ENCODE measurements at regions of chr22 and their contacts with region 1.

Region 1: DNA sequence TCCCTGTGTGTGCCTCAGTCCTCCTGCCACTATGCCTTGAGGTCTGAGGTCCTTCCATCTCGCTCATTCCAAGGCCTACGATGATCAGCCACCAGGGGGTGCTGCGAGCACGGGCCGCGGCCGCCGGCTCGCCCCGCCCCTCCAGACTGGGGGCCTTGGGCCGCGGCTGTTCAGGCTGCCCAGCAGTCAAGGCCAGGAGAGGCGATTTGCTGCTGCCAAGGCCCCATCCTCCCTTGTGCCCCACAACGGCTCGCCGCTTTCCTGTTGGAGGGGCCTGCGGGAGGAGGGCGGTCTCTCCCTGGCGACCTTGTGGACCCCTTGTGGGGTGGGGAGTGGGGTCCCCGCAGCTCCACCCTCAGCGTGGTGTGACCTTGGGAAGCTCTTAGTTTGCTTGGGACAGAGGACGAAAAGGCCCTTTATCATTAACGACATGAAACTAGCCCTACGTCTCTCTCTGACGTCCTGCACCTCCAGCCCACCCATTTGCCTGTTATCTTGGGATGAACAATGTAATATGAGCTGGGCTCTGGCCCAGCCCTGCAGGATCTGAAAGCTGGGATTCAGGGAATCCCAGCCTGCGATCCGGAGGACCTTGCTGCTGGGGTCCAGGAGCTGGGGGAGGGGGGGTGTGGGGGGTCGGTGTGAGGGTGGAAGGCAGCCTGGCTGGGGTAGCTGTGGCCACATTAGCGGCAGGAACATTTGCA is 5.3 kb upstream of the GALR3 start:
- DNase-seq: peak; percentile 94

Region 2: GRCh38 chr22:37862570-37863325 is 44.9 kb after region 1 on chr22:
- intact Hi-C with region 1: loop called (anchors 2 kb)
- DNase-seq: no peak

Region 3: GRCh38 chr22:37896181-37896592 is 78.3 kb after region 1 on chr22:
- intact Hi-C with region 1: no loop called
- DNase-seq: no peak

Region 4: DNA sequence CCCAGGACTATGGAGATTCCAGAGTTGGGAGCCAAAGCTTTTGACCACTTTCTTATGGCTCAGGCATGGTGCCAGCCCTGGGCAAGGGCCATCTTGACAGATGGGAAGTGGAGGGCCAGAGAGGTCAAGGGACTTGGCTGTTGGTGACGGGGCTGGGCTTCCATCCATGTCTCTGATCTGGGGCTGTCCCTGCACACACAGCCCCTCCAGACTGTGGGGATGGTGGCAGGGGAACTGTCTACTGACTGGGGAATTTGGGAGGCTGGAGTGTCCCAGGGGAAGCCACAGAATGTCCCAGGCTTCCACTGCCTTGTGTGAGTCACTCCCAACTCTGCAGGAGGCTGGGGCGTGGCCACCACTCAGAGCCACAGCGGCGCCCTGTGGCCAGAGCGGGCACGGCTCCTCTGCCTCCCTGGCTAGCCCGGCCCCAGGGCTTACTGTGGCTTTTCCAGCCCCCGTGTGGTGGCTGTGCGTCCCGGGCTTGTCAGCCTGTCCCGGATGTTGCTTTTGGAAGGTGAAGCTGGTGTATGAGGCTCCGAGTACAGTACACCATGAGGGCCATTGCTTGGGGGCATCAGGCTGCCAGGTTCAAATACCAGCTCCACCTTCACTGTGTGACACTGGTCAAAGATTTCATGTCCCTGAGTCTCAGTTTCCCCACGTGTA is 116.0 kb after region 1 on chr22:
- intact Hi-C with region 1: loop called in 1 of 2 experiments (anchors 10 kb)
- DNase-seq: peak; percentile 97

Region 5: GRCh38 chr22:37965940-37966664 is 148.2 kb after region 1 on chr22:
- intact Hi-C with region 1: loop called (anchors 5 kb)
- DNase-seq: no peak

Measured in posterior vena cava (tissue), 2 donors.